ENCODE measurements at regions of chr22 and their contacts with region 1.

Region 1: DNA sequence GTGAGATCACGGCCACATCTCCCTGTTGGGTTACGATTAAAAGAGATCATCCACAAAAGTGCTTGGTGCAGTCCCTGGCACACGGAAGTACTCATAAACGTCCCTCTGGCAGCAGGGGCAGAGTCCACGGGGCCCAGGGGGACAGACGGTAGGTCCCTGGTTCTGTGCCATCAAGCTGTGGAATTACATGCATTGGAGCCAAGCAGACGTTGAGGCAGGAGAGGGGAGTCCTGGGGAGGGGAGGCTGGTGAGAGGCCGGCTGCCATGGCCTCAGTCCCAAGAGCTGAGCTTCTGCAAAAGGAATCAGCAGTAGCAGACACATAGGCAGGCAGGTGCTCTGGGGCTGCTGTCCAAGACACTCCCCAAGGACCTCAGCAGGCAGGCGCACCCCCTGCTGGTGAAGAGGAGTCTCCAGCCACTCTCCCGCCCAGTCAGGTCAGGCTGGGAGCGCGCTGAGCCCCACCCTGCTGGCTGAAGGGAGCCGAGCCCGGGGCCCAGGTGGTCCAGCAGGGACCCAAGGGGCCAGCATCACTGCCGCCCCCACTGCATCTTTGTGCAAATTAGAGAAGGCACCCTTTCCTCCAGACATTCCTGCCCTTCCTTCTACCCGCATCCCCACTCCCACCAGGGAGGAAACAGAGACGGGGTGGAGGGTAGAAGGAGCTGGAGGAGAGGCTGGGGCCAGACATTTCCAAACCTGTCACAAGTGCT is 7.6 kb upstream of the KCTD17 start:
- DNase-seq: peak in 2 of 5 donors; percentile 53 to 68
- H3K4me3 ChIP-seq: no peak overlapping the region
- H3K27ac ChIP-seq: no peak overlapping the region
- H3K4me1 ChIP-seq: no peaks in the 10 kb centered on the region
- H3K27me3 ChIP-seq: no peaks in the 10 kb centered on the region
- CTCF ChIP-seq: peak in 2 of 3 donors; percentile 18 to 20
- EP300 ChIP-seq: no peak
- POLR2A ChIP-seq: no peak

Region 2: GRCh38 chr22:36781656-36782627 is 262.0 kb before region 1 on chr22:
- intact Hi-C with region 1: loop called in 1 of 4 experiments (anchors 10 kb)
- DNase-seq: peak; percentile 50 to 84 (median 73)
- H3K4me3 ChIP-seq: no peak overlapping the region
- H3K27ac ChIP-seq: no peak overlapping the region
- H3K4me1 ChIP-seq: peaks cover under 1% of the 10 kb centered on the region
- H3K27me3 ChIP-seq: no peaks in the 10 kb centered on the region
- CTCF ChIP-seq: peak; percentile 63 to 78 (median 69)
- EP300 ChIP-seq: no peak
- POLR2A ChIP-seq: no peak

Region 3: DNA sequence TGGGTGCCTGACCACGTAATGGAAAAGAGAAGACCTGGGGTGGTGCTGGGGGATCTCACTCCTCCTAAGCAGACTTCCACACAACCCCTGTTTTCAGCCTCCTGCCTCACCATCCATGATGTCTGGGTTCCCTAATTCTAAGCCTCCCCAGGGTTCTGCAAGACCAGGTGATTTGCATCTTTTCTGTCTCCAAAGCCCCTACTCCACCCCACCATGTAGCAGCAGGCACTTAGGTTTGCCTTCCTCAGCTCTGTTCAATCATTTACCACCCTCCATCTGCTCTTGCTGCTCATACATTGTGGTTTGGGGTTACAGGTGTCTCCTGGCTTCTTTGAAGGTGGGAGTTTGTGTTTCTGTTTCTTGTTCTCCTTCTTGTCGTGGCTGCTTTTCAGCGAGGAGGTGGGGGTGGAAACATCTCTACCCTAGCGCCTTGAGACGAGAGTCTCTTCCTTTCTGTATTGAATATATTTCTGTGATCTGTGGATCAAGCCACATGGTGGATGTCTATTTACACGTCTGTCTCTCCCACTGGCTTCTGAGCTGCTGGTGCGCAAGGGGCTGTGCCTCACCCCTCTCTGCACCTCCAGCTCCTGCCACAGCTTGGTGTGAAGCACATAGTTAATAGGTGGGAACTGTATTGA is 174.9 kb after region 1 on chr22:
- intact Hi-C with region 1: no loop called
- DNase-seq: no peak
- H3K4me3 ChIP-seq: no peak overlapping the region
- H3K27ac ChIP-seq: no peak overlapping the region
- H3K4me1 ChIP-seq: no peaks in the 10 kb centered on the region
- H3K27me3 ChIP-seq: no peaks in the 10 kb centered on the region
- CTCF ChIP-seq: no peak
- EP300 ChIP-seq: no peak
- POLR2A ChIP-seq: no peak

Measured in ovary (tissue), 10 donors.